ENCODE measurements at regions of chr15 and their contacts with region 1.

Region 1: DNA sequence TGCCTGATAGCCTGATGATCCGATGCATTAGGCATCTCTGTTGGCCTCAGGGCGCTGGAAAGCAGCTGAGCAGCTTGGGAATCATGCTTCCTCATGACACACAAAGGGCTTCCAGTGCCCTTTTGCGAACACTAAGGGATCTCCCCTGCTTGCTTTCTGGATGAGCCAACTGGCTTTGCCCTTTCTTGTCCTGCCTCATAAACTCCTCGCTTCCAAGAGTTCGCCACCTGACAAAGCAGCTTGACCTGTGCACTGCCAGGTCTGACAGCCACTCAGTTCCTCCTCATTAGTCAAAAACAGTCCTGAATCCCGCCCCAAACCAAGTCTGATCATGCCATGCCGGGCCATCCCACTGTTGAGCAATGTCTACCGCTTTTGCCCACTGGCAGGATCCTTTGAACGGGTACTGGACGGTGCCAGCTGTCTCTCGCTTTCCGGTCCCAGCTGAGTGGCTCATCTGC is 265.4 kb upstream of the LYSMD4 start:
- DNase-seq: peak; percentile 80
- H3K4me3 ChIP-seq: no peak overlapping the region
- H3K27ac ChIP-seq: no peak overlapping the region
- H3K4me1 ChIP-seq: peaks cover 13% of the 10 kb centered on the region
- H3K27me3 ChIP-seq: no peaks in the 10 kb centered on the region
- CTCF ChIP-seq: no peak

Region 2: DNA sequence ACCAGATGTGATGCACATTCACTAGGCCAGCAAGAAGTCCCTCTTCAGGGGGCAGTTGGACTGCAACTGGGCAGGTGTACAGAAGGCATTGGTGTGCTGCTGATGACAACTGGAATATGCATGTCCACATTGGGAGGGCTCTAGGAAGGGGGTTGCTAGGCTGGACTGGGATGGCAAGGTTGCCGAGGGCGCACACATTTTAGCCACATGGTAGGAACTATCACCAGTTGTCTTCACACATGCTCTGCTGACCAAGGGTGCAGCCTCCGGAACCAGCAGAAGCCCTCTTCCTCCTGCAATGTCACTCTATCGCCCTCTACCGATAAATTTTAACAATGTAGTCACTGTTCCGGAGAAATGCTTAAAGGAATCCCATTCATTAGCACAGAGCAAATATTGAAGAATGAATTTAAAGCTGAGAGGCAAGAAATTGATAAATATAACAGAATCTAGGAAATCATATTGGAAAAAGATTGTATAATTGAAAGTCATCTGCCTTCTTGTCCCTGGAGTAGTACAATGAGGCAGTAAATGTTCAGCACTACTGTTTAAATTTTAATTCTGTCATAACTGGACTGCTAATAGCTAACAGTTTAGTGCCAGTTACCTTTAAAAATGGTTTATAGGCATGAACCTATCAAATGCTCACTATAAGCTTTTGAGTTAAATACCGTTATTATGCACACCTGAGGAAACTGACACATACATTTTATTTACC is 242.8 kb before region 1 on chr15:
- CTCF ChIA-PET with region 1: no interaction called
- dilution Hi-C with region 1: no loop called
- in situ Hi-C with region 1: no loop called
- intact Hi-C with region 1: no loop called
- DNase-seq: peak; percentile 52
- H3K4me3 ChIP-seq: no peak overlapping the region
- H3K27ac ChIP-seq: no peak overlapping the region
- H3K4me1 ChIP-seq: no peaks in the 10 kb centered on the region
- H3K27me3 ChIP-seq: no peaks in the 10 kb centered on the region
- CTCF ChIP-seq: peak; percentile 74 to 87

Region 3: DNA sequence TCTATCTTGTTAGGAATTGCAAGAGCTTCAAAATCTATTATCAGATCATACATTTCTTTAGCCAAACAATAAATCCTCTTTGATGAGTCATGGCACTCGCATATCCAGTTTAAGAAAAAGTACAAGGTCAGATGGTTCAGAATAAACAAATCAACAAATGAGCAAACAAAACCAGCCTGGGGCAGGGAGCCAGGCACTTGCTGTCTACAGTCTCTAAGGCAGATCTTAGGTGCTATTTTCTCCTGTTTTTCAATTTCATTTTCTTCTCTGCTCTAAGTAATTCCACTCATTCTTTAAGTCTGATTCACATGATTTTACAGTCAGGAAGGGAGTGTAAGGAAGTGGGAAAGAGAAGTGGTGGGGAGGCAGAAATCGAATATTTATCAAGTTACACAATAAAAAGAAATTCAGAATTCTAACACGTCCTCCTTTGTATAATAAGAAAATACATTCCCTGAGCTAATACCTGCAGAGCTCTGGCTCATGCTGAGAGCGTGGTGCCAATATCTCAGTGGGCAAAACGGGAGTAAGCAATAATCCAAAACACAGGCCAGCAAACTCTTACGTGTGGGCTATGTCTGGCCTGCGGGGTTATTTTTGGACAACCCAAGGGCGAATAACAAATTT is 44.5 kb after region 1 on chr15:
- CTCF ChIA-PET with region 1: no interaction called
- dilution Hi-C with region 1: loop called (anchors 5 kb)
- in situ Hi-C with region 1: no loop called
- intact Hi-C with region 1: loop called (anchors 2 kb)
- DNase-seq: peak; percentile 75
- H3K4me3 ChIP-seq: no peak overlapping the region
- H3K27ac ChIP-seq: peak overlapping the region; percentile 43
- H3K4me1 ChIP-seq: peaks cover 24% of the 10 kb centered on the region
- H3K27me3 ChIP-seq: no peaks in the 10 kb centered on the region
- CTCF ChIP-seq: no peak

Measured in mammary epithelial cell (primary cell).